Dendritic cell treated with granulocyte-macrophage colony-stimulating factor and Interleukin-4, amounts not matched to agents 40 ng/mL and 50 ng/mL, for 4 days (primary cell): ENCODE measurements at regions of chr10 and their contacts with region 1.

Region 1: GRCh38 chr10:79374312-79375191 is 27.3 kb downstream of the PPIF start:
- H3K4me3 Mint-ChIP-seq: no peak overlapping the region
- H3K27ac Mint-ChIP-seq: no peak overlapping the region
- H3K4me1 Mint-ChIP-seq: peaks cover 5% of the 10 kb centered on the region
- H3K27me3 Mint-ChIP-seq: peaks cover 3% of the 10 kb centered on the region

Region 2: GRCh38 chr10:79463578-79464496 is 89.3 kb after region 1 on chr10:
- intact Hi-C with region 1: loop called (anchors 2 kb)
- H3K4me3 Mint-ChIP-seq: no peak overlapping the region
- H3K27ac Mint-ChIP-seq: no peak overlapping the region
- H3K4me1 Mint-ChIP-seq: peaks cover 18% of the 10 kb centered on the region
- H3K27me3 Mint-ChIP-seq: peaks cover 2% of the 10 kb centered on the region

Region 3: GRCh38 chr10:79487296-79488194 is 113.0 kb after region 1 on chr10:
- intact Hi-C with region 1: loop called (anchors 1 kb)
- H3K4me3 Mint-ChIP-seq: no peak overlapping the region
- H3K27ac Mint-ChIP-seq: no peak overlapping the region
- H3K4me1 Mint-ChIP-seq: peaks cover 24% of the 10 kb centered on the region
- H3K27me3 Mint-ChIP-seq: peaks cover 20% of the 10 kb centered on the region

Region 4: GRCh38 chr10:80078448-80079311 is 704.1 kb after region 1 on chr10 and contains the start of gene TMEM254:
- intact Hi-C with region 1: no loop called
- H3K4me3 Mint-ChIP-seq: peak within 1 kb of the TSS; percentile 92
- H3K27ac Mint-ChIP-seq: peak within 1 kb of the TSS; percentile 95
- H3K4me1 Mint-ChIP-seq: peaks cover 23% of the 10 kb centered on the region
- H3K27me3 Mint-ChIP-seq: no peaks in the 10 kb centered on the region